Transverse colon (tissue), 4 donors: ENCODE measurements at regions of chr5 and their contacts with region 1.

Region 1: GRCh38 chr5:158275511-158275910 is 416.6 kb upstream of the CLINT1 start:
- DNase-seq: no peak
- H3K4me3 ChIP-seq: no peak overlapping the region
- H3K27ac ChIP-seq: no peak overlapping the region
- H3K4me1 ChIP-seq: no peaks in the 10 kb centered on the region
- H3K27me3 ChIP-seq: no peaks in the 10 kb centered on the region
- CTCF ChIP-seq: no peak
- EP300 ChIP-seq: no peak
- POLR2A ChIP-seq: no peak

Region 2: DNA sequence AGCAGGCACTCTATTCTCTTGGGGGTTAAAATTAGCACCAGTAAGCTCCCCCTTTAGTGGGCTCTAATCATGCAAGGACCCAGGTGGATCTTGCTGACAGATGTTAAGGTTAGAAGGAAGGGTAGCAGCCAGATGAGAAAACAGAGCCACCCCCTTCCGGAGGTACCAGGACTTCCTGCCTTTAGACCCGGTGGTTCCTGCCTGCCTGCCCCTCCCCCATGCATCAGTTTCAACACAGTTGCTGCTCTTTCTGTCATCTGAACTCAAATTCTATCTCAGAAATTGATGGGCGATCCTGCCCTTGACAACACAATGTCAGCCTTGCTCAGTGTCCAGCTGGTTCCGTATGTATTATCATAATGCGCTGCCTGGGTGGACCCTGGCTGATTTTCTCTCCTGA is 536.9 kb after region 1 on chr5:
- in situ Hi-C with region 1: no loop called
- intact Hi-C with region 1: loop called (anchors 5 kb)
- DNase-seq: peak; percentile 25
- H3K4me3 ChIP-seq: no peak overlapping the region
- H3K27ac ChIP-seq: no peak overlapping the region
- H3K4me1 ChIP-seq: no peaks in the 10 kb centered on the region
- H3K27me3 ChIP-seq: no peaks in the 10 kb centered on the region
- CTCF ChIP-seq: no peak
- EP300 ChIP-seq: no peak
- POLR2A ChIP-seq: no peak

Region 3: DNA sequence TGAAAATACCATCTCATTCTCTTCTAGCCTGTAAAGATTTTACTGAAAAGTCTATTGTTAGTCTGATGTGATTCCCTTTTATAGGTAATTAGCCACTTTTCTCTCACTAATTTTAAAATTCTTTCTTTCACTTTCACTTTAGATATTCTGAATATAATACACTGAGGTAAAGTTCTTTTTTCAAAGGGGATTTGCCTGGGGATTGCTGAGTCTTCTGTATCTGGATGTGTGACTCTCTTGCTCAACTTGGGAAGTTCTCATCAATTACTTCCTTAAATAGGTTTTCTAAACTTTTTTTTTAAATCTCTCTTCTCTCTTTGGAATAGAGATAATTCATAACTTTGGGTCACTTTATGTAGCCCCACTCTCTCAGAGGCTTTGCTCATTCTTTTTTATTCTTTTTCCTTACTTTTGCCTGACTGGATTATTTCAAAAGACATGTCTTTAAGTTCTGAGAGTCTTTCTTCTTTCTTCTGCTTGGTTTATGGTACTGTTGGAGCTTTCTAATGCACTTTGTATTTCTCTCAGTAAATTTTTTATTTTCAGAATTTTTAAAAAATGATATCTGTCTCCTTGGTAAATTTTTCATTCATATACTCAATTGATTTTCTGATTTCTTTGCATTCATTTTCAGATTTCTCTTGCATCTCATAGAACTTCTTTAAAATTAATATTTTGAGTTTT is 1110.7 kb after region 1 on chr5:
- in situ Hi-C with region 1: no loop called
- intact Hi-C with region 1: no loop called
- DNase-seq: no peak
- H3K4me3 ChIP-seq: no peak overlapping the region
- H3K27ac ChIP-seq: no peak overlapping the region
- H3K4me1 ChIP-seq: no peaks in the 10 kb centered on the region
- H3K27me3 ChIP-seq: no peaks in the 10 kb centered on the region
- CTCF ChIP-seq: no peak
- EP300 ChIP-seq: no peak
- POLR2A ChIP-seq: no peak